Endothelial cell of umbilical vein (primary cell): ENCODE measurements at regions of chr16 and their contacts with region 1.

Region 1: GRCh38 chr16:10918294-10919002 is 23.8 kb downstream of the DEXI start:
- DNase-seq: peak; percentile 92
- H3K4me3 ChIP-seq: peak overlapping the region in 1 of 3 experiments; percentile 9
- H3K27ac ChIP-seq: no peak overlapping the region
- H3K4me1 ChIP-seq: no peaks in the 10 kb centered on the region
- H3K27me3 ChIP-seq: no peaks in the 10 kb centered on the region
- CTCF ChIP-seq: peak; percentile 95 to 98
- POLR2A ChIP-seq: no peak

Region 2: DNA sequence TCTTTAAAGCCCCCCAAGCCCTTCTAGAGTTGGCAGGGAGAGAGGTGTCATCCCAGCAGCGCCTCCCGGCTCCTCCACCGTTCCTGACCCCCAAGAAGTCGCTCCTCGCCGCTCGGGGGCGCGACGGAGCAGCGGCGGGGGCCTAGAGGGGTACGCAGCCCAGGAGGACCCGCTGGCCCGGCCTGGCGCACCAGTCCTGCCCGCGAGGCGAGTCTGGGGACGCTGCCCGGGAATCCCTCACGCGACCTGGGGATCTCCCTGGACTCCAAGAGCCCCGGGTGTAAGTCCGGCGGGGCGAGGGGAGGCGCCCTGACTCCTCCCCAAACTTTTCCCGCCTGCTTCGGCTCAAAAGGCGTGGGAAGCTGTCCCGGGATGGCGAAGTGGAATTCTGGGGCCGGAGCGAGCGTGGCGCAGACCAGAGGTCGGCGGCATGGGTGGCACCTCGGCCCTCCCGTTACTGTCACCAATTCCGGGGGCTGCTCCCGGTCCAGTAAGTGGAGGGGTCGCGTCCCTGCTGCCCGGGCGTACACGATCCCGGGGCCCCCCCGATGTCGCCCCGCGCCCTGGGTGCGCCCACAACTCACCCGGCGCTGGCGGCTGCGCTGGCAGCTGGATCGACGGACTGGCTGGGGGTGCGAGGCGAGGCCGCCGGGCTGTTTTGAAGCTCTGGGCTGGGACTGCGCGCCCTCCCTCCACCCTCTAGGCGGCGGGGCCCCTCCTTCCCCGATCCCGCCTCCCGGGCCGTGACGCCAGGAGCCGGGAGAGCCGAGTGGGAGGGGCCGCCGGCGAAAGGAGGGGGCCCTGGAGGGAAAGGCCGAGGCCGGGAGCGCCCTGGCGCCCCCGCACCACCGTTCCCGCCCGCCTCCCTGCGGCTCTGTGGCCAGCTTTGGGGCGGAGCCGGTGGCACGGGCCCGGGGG is 338.2 kb before region 1 on chr16 and contains the start of gene EMP2:
- CTCF ChIA-PET with region 1: interaction called, 10 read pairs
- POLR2A ChIA-PET with region 1: no interaction called
- dilution Hi-C with region 1: no loop called
- intact Hi-C with region 1: no loop called
- DNase-seq: peak; percentile 72
- H3K4me3 ChIP-seq: peak within 1 kb of the TSS; percentile 64 to 73 (median 64)
- H3K27ac ChIP-seq: peak within 1 kb of the TSS; percentile 30
- H3K4me1 ChIP-seq: peaks cover 3% of the 10 kb centered on the region
- H3K27me3 ChIP-seq: peaks cover 6 to 12% of the 10 kb centered on the region in 2 experiments
- CTCF ChIP-seq: peak; percentile 47 to 80
- POLR2A ChIP-seq: no peak
- total RNA-seq, gene EMP2: 18.3 and 25.5 TPM in 2 replicates

Region 3: GRCh38 chr16:10737068-10737625 is 181.3 kb before region 1 on chr16:
- CTCF ChIA-PET with region 1: interaction called, 29 read pairs
- POLR2A ChIA-PET with region 1: no interaction called
- dilution Hi-C with region 1: no loop called
- intact Hi-C with region 1: no loop called
- DNase-seq: peak; percentile 67
- H3K4me3 ChIP-seq: no peak overlapping the region
- H3K27ac ChIP-seq: no peak overlapping the region
- H3K4me1 ChIP-seq: peaks cover 7% of the 10 kb centered on the region
- H3K27me3 ChIP-seq: no peaks in the 10 kb centered on the region
- CTCF ChIP-seq: peak; percentile 77 to 82
- POLR2A ChIP-seq: no peak

Region 4: GRCh38 chr16:10828851-10829731 is 89.4 kb before region 1 on chr16:
- CTCF ChIA-PET with region 1: no interaction called
- POLR2A ChIA-PET with region 1: no interaction called
- dilution Hi-C with region 1: no loop called
- intact Hi-C with region 1: loop called (anchors 5 kb)
- DNase-seq: peak; percentile 92
- H3K4me3 ChIP-seq: no peak overlapping the region
- H3K27ac ChIP-seq: no peak overlapping the region
- H3K4me1 ChIP-seq: peaks cover 12% of the 10 kb centered on the region
- H3K27me3 ChIP-seq: peaks cover 0 to 4% of the 10 kb centered on the region in 2 experiments
- CTCF ChIP-seq: no peak
- POLR2A ChIP-seq: no peak

Region 5: GRCh38 chr16:10937068-10937859 is 18.8 kb after region 1 on chr16:
- CTCF ChIA-PET with region 1: interaction called, 17 read pairs
- POLR2A ChIA-PET with region 1: no interaction called
- dilution Hi-C with region 1: no loop called
- intact Hi-C with region 1: no loop called
- DNase-seq: no peak
- H3K4me3 ChIP-seq: no peak overlapping the region
- H3K27ac ChIP-seq: no peak overlapping the region
- H3K4me1 ChIP-seq: peaks cover 46% of the 10 kb centered on the region
- H3K27me3 ChIP-seq: no peaks in the 10 kb centered on the region
- CTCF ChIP-seq: no peak
- POLR2A ChIP-seq: no peak